Activated naive CD4-positive, alpha-beta T cell treated with anti-CD3 and anti-CD28 coated beads for 36 hours (primary cell): ENCODE measurements at regions of chr19 and their contacts with region 1.

Region 1: DNA sequence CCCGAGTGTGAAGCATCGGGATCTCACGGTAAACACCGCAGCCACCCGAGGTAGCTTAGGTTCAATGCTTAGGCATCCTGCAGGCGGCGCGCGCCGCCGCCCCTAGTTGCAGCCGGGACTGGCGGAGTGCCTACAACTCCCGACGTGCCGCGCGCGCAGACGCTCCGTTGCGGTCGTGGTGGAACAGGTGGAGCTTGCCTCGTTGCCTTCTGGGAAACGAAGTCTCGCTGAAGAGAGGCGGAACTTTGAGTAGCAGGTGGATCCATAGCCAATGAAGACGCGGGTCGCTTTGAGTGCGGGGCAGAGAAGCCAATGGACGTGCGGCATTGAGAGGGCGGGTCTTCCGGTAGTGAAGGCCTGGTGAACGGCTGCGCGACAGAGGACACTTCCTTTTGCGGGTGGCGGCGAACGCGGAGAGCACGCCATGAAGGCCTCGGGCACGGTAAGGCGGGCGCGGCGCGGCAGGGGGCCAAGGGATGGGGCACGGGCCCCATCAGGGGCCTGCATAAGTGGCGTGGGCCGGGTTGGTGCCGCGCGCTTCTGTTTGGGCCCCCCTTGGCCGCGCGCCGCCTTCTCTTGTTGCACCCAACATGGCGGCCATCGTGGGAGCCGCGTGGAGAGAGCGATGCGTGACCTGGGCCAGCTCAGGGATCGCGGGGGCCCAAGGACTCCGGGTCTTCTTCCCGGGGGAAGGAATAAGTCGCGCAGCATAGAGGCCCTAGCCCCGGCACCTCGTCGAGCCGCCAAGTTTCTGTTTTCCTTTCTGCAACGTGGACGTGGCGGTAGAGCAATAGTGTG is at the start of gene RPL18A:
- DNase-seq: peak; percentile 100
- H3K4me3 Mint-ChIP-seq: peak within 1 kb of the TSS; percentile 92
- H3K27ac Mint-ChIP-seq: peak within 1 kb of the TSS; percentile 96
- H3K4me1 Mint-ChIP-seq: peaks cover 37% of the 10 kb centered on the region
- H3K27me3 Mint-ChIP-seq: no peaks in the 10 kb centered on the region
- total RNA-seq, gene RPL18A: 4,021 to 4,160 TPM

Region 2: GRCh38 chr19:17370026-17370587 is 489.6 kb before region 1 on chr19:
- CTCF ChIA-PET with region 1: no interaction called
- intact Hi-C with region 1: no loop called
- DNase-seq: no peak
- H3K4me3 Mint-ChIP-seq: no peak overlapping the region
- H3K27ac Mint-ChIP-seq: no peak overlapping the region
- H3K4me1 Mint-ChIP-seq: peaks cover 6% of the 10 kb centered on the region
- H3K27me3 Mint-ChIP-seq: peaks cover 7% of the 10 kb centered on the region

Region 3: DNA sequence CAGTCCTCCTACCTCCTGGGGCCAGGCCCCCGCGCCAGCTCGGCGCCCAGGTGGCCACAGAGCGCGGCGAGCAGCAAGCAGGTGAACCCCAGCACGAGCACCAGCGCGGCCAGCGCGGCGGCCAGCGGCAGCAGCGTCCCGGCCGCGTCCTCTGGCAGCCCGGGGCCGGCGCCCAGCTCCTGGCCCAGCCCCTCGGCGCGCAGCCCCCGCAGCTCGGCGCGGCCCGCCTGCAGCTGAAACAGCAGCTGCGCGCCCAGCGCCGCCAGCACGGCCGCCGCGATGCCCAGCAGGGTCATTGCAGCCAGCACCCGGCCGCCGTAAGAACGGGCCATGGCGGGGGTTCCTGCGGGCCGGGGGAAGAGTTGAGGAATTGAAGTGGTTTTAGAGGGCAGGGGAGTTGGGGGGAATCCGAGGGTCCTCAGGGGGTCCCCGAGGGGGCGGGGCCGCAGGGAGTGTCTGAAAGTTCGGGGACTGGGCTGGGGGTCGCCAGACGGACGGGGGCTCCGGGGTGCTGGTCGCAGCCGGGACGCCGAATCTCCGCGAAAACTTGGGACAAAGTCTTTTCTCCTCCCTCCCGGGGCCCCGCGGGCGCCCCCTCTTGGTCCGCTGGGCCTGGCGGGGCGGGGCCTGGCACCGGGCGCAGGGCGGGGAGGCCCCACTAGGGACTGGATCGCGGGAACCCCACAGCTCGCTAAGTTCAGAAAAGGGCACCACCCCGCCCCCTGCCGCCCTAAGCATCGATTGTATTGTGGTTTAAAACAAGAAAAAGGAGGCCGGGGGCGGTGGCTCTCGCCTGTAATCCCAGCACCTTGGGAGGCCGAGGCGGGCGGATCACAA is 411.4 kb before region 1 on chr19 and contains the start of gene TMEM221:
- CTCF ChIA-PET with region 1: no interaction called
- intact Hi-C with region 1: loop called (anchors 2 kb)
- DNase-seq: peak; percentile 80
- H3K4me3 Mint-ChIP-seq: peak within 1 kb of the TSS; percentile 27
- H3K27ac Mint-ChIP-seq: no peak within 1 kb of the TSS
- H3K4me1 Mint-ChIP-seq: peaks cover 14% of the 10 kb centered on the region
- H3K27me3 Mint-ChIP-seq: peaks cover 12% of the 10 kb centered on the region
- total RNA-seq, gene TMEM221: not detected

Region 4: GRCh38 chr19:17555480-17555928 is 304.2 kb before region 1 on chr19 and contains the start of gene COLGALT1:
- CTCF ChIA-PET with region 1: no interaction called
- intact Hi-C with region 1: loop called (anchors 5 kb)
- DNase-seq: peak; percentile 99
- H3K4me3 Mint-ChIP-seq: peak within 1 kb of the TSS; percentile 74
- H3K27ac Mint-ChIP-seq: no peak within 1 kb of the TSS
- H3K4me1 Mint-ChIP-seq: peaks cover 16% of the 10 kb centered on the region
- H3K27me3 Mint-ChIP-seq: no peaks in the 10 kb centered on the region
- total RNA-seq, gene COLGALT1: 36.8 to 37.3 TPM

Region 5: GRCh38 chr19:17725422-17726078 is 134.2 kb before region 1 on chr19:
- CTCF ChIA-PET with region 1: interaction called, 6 read pairs
- intact Hi-C with region 1: loop called (anchors 1 kb)
- DNase-seq: no peak
- H3K4me3 Mint-ChIP-seq: no peak overlapping the region
- H3K27ac Mint-ChIP-seq: no peak overlapping the region
- H3K4me1 Mint-ChIP-seq: peaks cover 23% of the 10 kb centered on the region
- H3K27me3 Mint-ChIP-seq: no peaks in the 10 kb centered on the region

Region 6: DNA sequence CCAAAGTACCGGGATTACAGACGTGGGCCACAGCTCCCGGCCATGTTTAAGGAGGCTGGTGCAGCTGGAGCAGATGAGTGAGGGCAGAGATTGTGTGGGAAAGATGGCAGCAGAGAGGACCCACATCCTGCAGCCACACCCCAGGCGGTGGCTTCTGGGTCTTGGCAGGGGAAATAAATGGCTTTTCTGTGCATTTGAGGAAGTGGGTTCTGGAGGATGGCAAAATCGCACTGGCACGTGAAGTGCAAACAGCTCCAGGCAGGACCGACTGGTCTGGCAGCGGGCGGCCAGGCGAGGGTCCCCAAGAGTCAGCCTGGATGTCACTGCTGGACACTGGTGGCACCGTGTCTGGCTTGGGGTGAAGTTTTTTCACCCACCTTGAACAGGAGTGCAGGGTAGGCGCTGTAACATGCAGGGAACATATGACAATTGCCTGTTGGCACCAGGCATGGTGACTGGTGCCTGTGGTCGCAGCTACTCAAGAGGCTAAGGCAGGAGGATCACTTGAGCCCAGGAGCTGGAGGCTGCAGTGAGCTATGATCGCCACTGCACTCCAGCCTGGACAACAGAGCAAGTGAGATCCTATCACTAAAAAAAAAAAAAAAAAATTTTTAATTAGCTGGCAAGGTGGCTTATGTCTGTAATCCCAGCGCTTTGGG is 56.3 kb before region 1 on chr19:
- CTCF ChIA-PET with region 1: interaction called, 15 read pairs
- intact Hi-C with region 1: no loop called
- DNase-seq: peak; percentile 43
- H3K4me3 Mint-ChIP-seq: no peak overlapping the region
- H3K27ac Mint-ChIP-seq: peak overlapping the region; percentile 71
- H3K4me1 Mint-ChIP-seq: peaks cover 35% of the 10 kb centered on the region
- H3K27me3 Mint-ChIP-seq: no peaks in the 10 kb centered on the region

Region 7: GRCh38 chr19:17889609-17890214 is 30.0 kb after region 1 on chr19:
- CTCF ChIA-PET with region 1: no interaction called
- intact Hi-C with region 1: no loop called
- DNase-seq: peak; percentile 35
- H3K4me3 Mint-ChIP-seq: no peak overlapping the region
- H3K27ac Mint-ChIP-seq: no peak overlapping the region
- H3K4me1 Mint-ChIP-seq: no peaks in the 10 kb centered on the region
- H3K27me3 Mint-ChIP-seq: no peaks in the 10 kb centered on the region

Region 8: GRCh38 chr19:17932485-17933338 is 73.0 kb after region 1 on chr19 and contains the start of gene CCDC124:
- CTCF ChIA-PET with region 1: interaction called, 70 read pairs
- intact Hi-C with region 1: loop called (anchors 1 kb)
- DNase-seq: peak; percentile 95
- H3K4me3 Mint-ChIP-seq: peak within 1 kb of the TSS; percentile 95
- H3K27ac Mint-ChIP-seq: peak within 1 kb of the TSS; percentile 96
- H3K4me1 Mint-ChIP-seq: peaks cover 25% of the 10 kb centered on the region
- H3K27me3 Mint-ChIP-seq: no peaks in the 10 kb centered on the region
- total RNA-seq, gene CCDC124: 107 to 118 TPM

Region 9: GRCh38 chr19:18152444-18152816 is 292.7 kb after region 1 on chr19:
- CTCF ChIA-PET with region 1: no interaction called
- intact Hi-C with region 1: loop called (anchors 1 kb)
- DNase-seq: peak; percentile 100
- H3K4me3 Mint-ChIP-seq: peak overlapping the region; percentile 79
- H3K27ac Mint-ChIP-seq: peak overlapping the region; percentile 93
- H3K4me1 Mint-ChIP-seq: peaks cover 22% of the 10 kb centered on the region
- H3K27me3 Mint-ChIP-seq: no peaks in the 10 kb centered on the region

Region 10: DNA sequence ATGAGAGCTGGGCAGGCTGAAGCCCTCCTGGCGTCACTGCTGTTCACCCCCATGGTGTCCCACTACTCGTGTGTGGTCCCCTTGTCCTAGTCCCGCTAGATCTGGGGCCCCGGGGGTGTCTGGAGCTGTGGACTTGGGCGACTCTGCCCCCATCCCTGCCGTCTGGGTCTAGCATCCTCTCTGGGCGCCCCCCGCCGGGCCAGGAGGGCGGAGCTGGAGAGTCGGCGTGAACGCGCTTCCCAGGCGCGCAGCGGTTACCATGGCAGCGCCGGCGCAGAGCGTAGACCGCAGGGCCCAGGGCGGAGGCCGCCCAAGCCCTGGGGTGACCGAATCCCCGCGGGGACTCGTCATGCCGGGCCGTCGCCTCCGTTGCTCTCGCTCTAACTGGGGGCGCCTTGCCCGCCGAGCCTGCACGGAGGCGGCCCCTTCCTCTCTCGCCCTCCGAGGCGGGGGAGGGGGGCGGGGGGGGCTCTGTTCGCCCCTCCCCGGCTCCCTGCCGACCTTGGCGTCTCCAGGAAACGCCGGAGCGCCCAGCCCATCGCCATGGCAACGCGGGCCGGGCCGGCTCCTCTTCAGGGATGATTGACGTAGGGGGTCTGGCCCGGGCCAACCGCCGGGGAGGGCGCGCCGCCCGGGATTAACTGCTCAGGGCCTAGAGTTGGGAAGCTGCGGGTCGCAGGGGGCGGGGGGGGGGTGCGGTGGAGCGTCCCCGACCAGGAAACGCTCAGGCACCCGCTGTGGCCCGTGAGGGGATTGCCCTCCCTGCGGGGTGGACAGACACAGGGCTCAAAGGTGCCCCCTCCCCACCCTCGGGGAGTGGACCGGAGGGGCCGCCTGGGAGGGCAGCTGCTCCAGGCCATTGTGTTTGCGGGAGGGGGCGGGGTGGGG is 569.3 kb after region 1 on chr19:
- CTCF ChIA-PET with region 1: no interaction called
- intact Hi-C with region 1: no loop called
- DNase-seq: peak; percentile 77
- H3K4me3 Mint-ChIP-seq: no peak overlapping the region
- H3K27ac Mint-ChIP-seq: no peak overlapping the region
- H3K4me1 Mint-ChIP-seq: peaks cover 19% of the 10 kb centered on the region
- H3K27me3 Mint-ChIP-seq: no peaks in the 10 kb centered on the region